ENCODE measurements at regions of chr12 and their contacts with region 1.

Region 1: GRCh38 chr12:116737774-116738700 is at the starts of genes RNFT2 and SPRING1:
- DNase-seq: peak; percentile 96 to 100 (median 98)
- ATAC-seq: peak; percentile 96
- H3K4me3 ChIP-seq: peak within 1 kb of the TSS; percentile 87
- H3K4me3 Mint-ChIP-seq: peak within 1 kb of the TSS; percentile 96
- H3K27ac ChIP-seq: peak within 1 kb of the TSS; percentile 27 to 39
- H3K27ac Mint-ChIP-seq: peak within 1 kb of the TSS; percentile 86
- H3K4me1 ChIP-seq: peaks cover 27% of the 10 kb centered on the region
- H3K4me1 Mint-ChIP-seq: peaks cover 35% of the 10 kb centered on the region
- H3K27me3 ChIP-seq: no peaks in the 10 kb centered on the region
- H3K27me3 Mint-ChIP-seq: no peaks in the 10 kb centered on the region
- CTCF ChIP-seq: no peak
- total RNA-seq, gene RNFT2: 4.9 to 6.0 TPM
- total RNA-seq, gene SPRING1: 7.6 to 7.8 TPM

Region 2: GRCh38 chr12:116924558-116925453 is 186.8 kb after region 1 on chr12:
- CTCF ChIA-PET with region 1: no interaction called
- POLR2A ChIA-PET with region 1: no interaction called
- intact Hi-C with region 1: loop called (anchors 5 kb)
- DNase-seq: peak in 13 of 14 experiments; percentile 10 to 94 (median 41)
- ATAC-seq: peak; percentile 92
- H3K4me3 ChIP-seq: no peak overlapping the region
- H3K4me3 Mint-ChIP-seq: peak overlapping the region; percentile 77
- H3K27ac ChIP-seq: peak overlapping the region; percentile 9 to 13
- H3K27ac Mint-ChIP-seq: peak overlapping the region; percentile 72
- H3K4me1 ChIP-seq: peaks cover 41% of the 10 kb centered on the region
- H3K4me1 Mint-ChIP-seq: peaks cover 70% of the 10 kb centered on the region
- H3K27me3 ChIP-seq: no peaks in the 10 kb centered on the region
- H3K27me3 Mint-ChIP-seq: no peaks in the 10 kb centered on the region
- CTCF ChIP-seq: no peak

Region 3: GRCh38 chr12:117190210-117190781 is 452.3 kb after region 1 on chr12 and contains the start of gene FBXO21:
- CTCF ChIA-PET with region 1: no interaction called
- POLR2A ChIA-PET with region 1: no interaction called
- intact Hi-C with region 1: loop called in 1 of 2 experiments (anchors 2 kb)
- DNase-seq: peak; percentile 89 to 97 (median 94)
- ATAC-seq: peak; percentile 91
- H3K4me3 ChIP-seq: peak within 1 kb of the TSS; percentile 91
- H3K4me3 Mint-ChIP-seq: peak within 1 kb of the TSS; percentile 94
- H3K27ac ChIP-seq: peak within 1 kb of the TSS in 1 of 2 donors; percentile 44
- H3K27ac Mint-ChIP-seq: peak within 1 kb of the TSS; percentile 91
- H3K4me1 ChIP-seq: peaks cover 19% of the 10 kb centered on the region
- H3K4me1 Mint-ChIP-seq: peaks cover 44% of the 10 kb centered on the region
- H3K27me3 ChIP-seq: no peaks in the 10 kb centered on the region
- H3K27me3 Mint-ChIP-seq: no peaks in the 10 kb centered on the region
- CTCF ChIP-seq: no peak
- total RNA-seq, gene FBXO21: 67.7 to 67.9 TPM